ENCODE measurements at regions of chr12 and their contacts with region 1.

Region 1: DNA sequence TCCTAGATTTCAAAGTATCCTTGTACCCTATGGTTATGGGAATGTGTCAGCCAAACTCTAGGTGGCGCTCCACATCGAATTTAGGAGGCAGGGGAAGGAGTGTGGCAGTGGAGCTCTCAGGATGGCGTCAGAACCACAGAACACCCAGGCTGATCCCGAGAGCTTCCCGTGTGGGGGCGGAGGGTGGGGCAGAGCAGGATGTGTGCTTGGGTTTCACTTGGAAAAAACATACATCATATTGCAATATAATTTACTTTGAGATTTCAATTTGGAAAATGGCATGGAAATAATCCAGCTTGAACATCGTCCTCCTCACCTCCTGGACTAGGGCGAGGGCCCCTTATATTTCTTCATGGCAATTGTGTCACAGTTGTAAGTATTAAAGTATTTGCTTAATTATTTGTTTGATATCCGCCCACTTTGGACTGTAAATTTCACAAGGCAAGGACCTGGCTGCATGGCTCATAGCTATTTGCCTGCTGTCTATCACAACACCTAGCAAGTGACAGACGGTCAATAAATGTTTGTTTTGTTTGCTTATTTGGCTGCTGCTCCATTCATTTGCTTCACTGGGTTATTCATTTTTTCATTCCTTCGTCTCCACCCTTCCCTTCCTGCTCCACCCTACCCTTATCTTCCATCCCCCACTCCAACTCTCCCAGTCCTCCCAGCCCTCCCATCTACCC is 221.5 kb upstream of the HMGA2 start:
- DNase-seq: peak; percentile 91
- H3K4me3 ChIP-seq: peak overlapping the region; percentile 18 to 77 (median 24)
- H3K27ac ChIP-seq: peak overlapping the region; percentile 95
- H3K4me1 ChIP-seq: peaks cover 50% of the 10 kb centered on the region
- H3K27me3 ChIP-seq: no peaks in the 10 kb centered on the region
- CTCF ChIP-seq: peak; percentile 58 to 78
- POLR2A ChIP-seq: peak; percentile 57

Region 2: DNA sequence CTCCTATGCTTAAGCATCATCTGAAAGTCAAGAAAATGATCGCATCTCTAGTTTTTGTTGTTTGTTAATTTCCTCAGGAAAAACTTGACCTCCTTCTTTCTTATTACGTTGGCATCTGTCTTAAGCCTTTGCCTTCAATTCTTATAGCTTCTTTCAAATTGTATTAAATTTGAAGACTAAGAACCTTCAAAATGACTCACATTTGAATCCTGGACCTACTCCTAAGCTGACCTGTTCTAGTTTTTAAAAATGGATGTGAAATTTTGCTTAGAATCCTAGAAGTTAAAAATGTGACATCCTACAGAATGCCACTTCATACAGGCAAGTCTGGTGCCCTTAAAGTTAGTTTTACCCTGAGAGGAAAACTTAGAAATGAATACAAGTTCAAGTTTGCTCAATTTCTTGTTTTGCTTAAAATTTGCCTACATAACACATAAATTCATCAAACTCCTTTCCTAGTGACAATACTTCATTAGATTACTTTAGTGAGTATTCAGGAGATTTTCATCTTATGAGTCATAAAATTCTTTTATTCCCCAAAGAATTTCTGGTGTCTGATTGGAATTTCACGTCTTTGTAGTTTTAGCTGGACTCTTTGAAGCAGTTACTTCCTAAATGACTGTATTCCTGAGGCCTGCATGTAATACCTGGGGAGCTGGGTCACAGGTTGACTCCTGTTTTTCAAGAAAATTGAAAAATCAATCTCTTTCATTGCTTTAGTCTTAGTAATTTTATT is 172.0 kb before region 1 on chr12:
- CTCF ChIA-PET with region 1: no interaction called
- POLR2A ChIA-PET with region 1: no interaction called
- dilution Hi-C with region 1: no loop called
- intact Hi-C with region 1: loop called (anchors 2 kb)
- DNase-seq: peak; percentile 80
- H3K4me3 ChIP-seq: peak overlapping the region in 1 of 3 experiments; percentile 28
- H3K27ac ChIP-seq: peak overlapping the region; percentile 94
- H3K4me1 ChIP-seq: peaks cover 51% of the 10 kb centered on the region
- H3K27me3 ChIP-seq: no peaks in the 10 kb centered on the region
- CTCF ChIP-seq: no peak
- POLR2A ChIP-seq: peak; percentile 60

Region 3: DNA sequence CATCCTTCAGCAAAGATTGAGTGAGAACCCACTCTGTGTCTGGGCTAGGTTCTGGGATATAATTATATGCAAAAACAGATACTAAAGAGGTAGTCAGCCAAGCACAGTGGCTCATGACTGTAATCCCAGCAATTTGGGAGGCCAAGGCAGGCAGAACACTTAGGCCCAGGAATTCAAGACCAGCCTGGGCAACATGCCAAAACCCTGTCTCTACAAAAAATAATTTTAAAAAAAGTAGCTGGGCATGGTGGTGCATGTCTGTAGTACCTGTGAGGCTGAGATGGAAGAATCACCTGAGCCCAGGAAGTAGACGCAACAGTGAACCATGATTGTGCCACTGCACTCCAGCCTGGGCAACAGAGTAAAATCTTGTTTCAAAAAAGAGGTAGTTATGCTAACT is 16.0 kb before region 1 on chr12:
- CTCF ChIA-PET with region 1: interaction called, 10 read pairs
- POLR2A ChIA-PET with region 1: no interaction called
- dilution Hi-C with region 1: no loop called
- intact Hi-C with region 1: no loop called
- DNase-seq: no peak
- H3K4me3 ChIP-seq: no peak overlapping the region
- H3K27ac ChIP-seq: no peak overlapping the region
- H3K4me1 ChIP-seq: no peaks in the 10 kb centered on the region
- H3K27me3 ChIP-seq: no peaks in the 10 kb centered on the region
- CTCF ChIP-seq: no peak
- POLR2A ChIP-seq: no peak

Region 4: GRCh38 chr12:65656904-65657351 is 54.2 kb after region 1 on chr12:
- CTCF ChIA-PET with region 1: interaction called, 11 read pairs
- POLR2A ChIA-PET with region 1: no interaction called
- dilution Hi-C with region 1: no loop called
- intact Hi-C with region 1: loop called (anchors 1 kb)
- DNase-seq: peak; percentile 89
- H3K4me3 ChIP-seq: no peak overlapping the region
- H3K27ac ChIP-seq: peak overlapping the region; percentile 100
- H3K4me1 ChIP-seq: peaks cover 66% of the 10 kb centered on the region
- H3K27me3 ChIP-seq: no peaks in the 10 kb centered on the region
- CTCF ChIP-seq: no peak
- POLR2A ChIP-seq: peak; percentile 70

Region 5: DNA sequence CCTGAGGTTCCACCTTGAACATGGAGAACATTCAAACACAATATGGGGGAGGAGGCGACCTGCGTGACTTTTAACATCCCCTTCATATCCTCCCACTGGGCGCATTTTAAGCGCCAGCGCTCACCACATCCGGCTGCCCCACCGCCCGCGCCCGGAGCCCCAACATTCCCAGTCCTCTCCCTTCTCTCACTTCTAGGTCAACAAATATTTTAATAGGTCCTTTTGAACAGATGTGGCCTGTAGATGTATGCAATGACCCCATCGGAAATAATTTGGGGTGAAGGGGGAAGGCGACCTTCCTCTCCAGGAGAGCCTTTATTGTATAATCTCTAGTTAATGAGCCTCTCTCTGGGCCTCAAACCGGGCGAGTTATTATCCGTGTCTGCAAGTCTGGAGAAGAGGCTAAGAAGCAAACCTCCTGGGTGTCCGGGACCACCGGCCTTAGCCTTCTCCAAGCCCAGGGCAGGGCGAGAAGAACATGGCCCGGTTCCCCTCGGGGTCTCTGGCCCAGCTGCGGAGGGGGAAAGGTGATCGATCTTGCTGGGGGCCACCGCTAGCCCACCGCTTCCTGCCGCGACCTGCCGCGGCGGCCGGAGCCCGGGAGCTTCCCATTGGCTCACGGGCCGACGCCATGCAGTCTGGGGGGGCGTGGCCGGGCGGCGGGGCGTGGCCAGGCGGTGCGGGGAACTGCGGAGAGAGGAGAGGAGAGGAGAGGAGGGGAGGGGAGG is 138.3 kb after region 1 on chr12:
- CTCF ChIA-PET with region 1: interaction called, 23 read pairs
- POLR2A ChIA-PET with region 1: no interaction called
- dilution Hi-C with region 1: no loop called
- intact Hi-C with region 1: loop called (anchors 2 kb)
- DNase-seq: peak; percentile 82
- H3K4me3 ChIP-seq: peak overlapping the region; percentile 75 to 88 (median 81)
- H3K27ac ChIP-seq: peak overlapping the region; percentile 77
- H3K4me1 ChIP-seq: peaks cover 5% of the 10 kb centered on the region
- H3K27me3 ChIP-seq: no peaks in the 10 kb centered on the region
- CTCF ChIP-seq: no peak
- POLR2A ChIP-seq: no peak

Region 6: GRCh38 chr12:65941388-65941787 is 338.6 kb after region 1 on chr12:
- CTCF ChIA-PET with region 1: interaction called, 5 read pairs
- POLR2A ChIA-PET with region 1: no interaction called
- dilution Hi-C with region 1: no loop called
- intact Hi-C with region 1: loop called (anchors 2 kb)
- DNase-seq: peak; percentile 79
- H3K4me3 ChIP-seq: no peak overlapping the region
- H3K27ac ChIP-seq: peak overlapping the region; percentile 82
- H3K4me1 ChIP-seq: peaks cover 62% of the 10 kb centered on the region
- H3K27me3 ChIP-seq: no peaks in the 10 kb centered on the region
- CTCF ChIP-seq: no peak
- POLR2A ChIP-seq: no peak

Region 7: DNA sequence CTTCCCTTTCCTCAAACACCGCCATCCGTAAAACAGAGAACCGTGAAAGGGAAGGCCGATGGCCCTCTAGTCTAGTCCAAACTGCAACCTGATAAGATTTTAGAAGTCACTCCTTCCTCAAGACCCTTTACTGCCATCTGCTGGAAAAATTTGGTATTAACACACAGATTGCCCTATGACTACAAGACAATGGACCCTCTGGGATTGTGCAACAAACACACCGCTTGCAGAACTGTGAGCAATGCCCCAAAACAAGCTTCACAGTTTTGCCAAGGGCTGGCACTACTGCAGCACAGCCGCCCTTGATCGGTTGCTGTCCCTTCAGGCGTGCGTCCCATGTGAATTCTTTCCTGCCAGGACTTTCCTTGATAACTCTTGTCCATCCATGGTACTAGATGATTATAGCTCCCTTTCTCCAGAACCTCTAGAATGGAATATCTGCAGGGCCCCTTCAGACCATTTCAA is 504.7 kb after region 1 on chr12:
- CTCF ChIA-PET with region 1: interaction called, 5 read pairs
- POLR2A ChIA-PET with region 1: no interaction called
- dilution Hi-C with region 1: no loop called
- intact Hi-C with region 1: loop called (anchors 5 kb)
- DNase-seq: peak; percentile 89
- H3K4me3 ChIP-seq: no peak overlapping the region
- H3K27ac ChIP-seq: no peak overlapping the region
- H3K4me1 ChIP-seq: peaks cover 2% of the 10 kb centered on the region
- H3K27me3 ChIP-seq: peaks cover 9 to 17% of the 10 kb centered on the region in 2 experiments
- CTCF ChIP-seq: peak; percentile 56 to 70
- POLR2A ChIP-seq: no peak